ENCODE measurements at regions of chr17 and their contacts with region 1.

Region 1: GRCh38 chr17:17535957-17536356 is 39.8 kb upstream of the RASD1 start:
- DNase-seq: no peak
- H3K4me3 Mint-ChIP-seq: no peak overlapping the region
- H3K27ac Mint-ChIP-seq: no peak overlapping the region
- H3K4me1 Mint-ChIP-seq: no peaks in the 10 kb centered on the region
- H3K27me3 Mint-ChIP-seq: no peaks in the 10 kb centered on the region

Region 2: DNA sequence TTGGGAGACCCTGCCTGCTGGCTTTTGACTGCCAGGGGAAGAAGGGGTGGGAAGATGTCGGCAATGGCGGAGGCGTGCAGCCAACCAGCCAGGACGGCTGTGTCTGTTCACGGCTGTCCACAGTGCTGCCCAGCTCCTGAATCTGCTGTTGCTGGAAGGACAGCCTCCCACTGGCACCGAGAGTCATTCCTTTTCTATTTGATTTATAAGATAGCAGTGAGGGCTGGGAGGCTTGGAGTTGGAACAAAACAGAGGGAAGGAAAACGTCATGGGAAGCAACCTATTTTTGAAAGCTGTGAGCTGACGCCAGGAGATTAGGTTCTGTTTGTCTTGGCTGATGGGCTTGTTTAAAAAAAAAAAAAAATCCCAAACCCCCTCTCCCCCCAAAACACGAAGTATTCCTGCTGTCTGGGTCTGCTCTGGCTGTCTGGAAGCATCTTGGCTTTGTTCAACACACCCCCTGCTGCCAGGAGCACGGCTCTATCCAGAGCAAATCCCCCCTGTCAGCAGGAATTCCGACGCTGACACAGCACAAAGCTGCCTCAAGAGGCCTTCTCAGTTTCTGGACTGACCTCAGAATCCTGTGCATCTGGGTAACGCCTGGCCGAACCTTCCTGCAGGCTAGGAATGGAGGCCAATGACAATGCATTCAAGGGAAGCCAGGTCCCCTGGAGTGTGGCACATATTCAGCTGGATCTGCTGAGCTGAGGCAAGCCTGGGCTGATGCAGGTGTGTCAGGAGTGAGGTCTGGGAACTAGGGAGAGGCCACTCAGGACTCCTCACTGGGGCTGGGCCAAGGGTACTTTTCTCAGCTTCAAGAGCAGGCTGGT is 341.8 kb after region 1 on chr17:
- CTCF ChIA-PET with region 1: no interaction called
- POLR2A ChIA-PET with region 1: no interaction called
- intact Hi-C with region 1: loop called (anchors 5 kb)
- DNase-seq: no peak
- H3K4me3 Mint-ChIP-seq: no peak overlapping the region
- H3K27ac Mint-ChIP-seq: no peak overlapping the region
- H3K4me1 Mint-ChIP-seq: no peaks in the 10 kb centered on the region
- H3K27me3 Mint-ChIP-seq: no peaks in the 10 kb centered on the region

Measured in activated CD4-positive, alpha-beta memory T cell treated with anti-CD3 and anti-CD28 coated beads for 36 hours (primary cell).